Activated CD8-positive, alpha-beta T cell treated with anti-CD3 and anti-CD28 coated beads, Interleukin-2, amount 10 ng/mL, durations not matched to agents 7 days and 5 days (primary cell): ENCODE measurements at regions of chr20 and their contacts with region 1.

Region 1: GRCh38 chr20:45436732-45437391 is 20.9 kb downstream of the PIGT start:
- DNase-seq: peak; percentile 90
- ATAC-seq: peak; percentile 99
- H3K4me3 Mint-ChIP-seq: peak overlapping the region; percentile 80
- H3K27ac Mint-ChIP-seq: peak overlapping the region; percentile 61
- H3K4me1 Mint-ChIP-seq: peaks cover 29% of the 10 kb centered on the region
- H3K27me3 Mint-ChIP-seq: peaks cover 1% of the 10 kb centered on the region

Region 2: DNA sequence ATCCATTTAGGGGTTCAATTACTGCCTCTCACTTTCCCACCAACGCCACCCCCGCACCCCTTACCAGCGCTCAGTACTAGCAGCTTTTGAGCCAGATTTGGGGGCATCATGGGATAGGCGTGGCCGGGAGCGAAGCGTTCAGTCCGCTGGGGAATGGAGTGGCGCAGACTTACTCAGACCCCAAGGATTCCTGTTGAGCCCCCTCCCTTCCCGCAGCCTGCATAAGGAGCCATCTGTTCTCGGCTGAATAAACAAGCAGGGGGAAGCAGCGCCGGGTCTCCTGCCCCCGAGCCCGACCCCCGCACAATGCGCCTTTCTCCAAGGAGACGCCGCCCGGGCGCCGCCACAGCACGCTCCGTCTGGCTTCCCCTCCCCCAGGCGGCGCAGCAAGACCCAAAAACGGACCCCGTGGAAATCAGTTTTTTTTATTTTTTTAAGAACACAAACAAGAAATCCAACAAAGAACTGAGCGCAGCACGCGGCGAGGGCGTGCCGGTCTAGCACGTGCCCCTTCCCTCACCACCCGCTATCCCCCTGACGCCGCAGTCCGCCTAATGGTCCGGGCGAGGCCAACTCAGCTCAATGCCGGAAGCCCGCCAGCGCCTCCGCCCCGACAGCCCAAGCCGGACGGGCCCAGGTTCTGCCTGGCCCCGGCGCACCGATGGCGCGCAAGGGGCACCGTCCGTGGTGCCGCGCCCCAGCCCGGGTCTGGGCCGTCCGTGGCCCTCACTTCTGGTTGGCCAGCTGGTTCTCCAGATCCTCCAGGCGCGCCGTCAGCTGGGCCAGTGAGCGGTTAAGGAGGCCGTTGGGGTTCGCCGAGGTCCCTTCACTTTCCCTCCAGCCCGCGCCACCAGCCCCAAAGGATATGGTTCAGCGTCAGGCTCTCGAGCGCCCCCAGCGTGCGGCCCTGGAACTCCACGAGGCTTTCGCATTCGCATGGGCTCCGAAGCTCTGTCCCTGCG is 143.5 kb before region 1 on chr20:
- CTCF ChIA-PET with region 1: interaction called, 20 read pairs
- POLR2A ChIA-PET with region 1: no interaction called
- DNase-seq: peak; percentile 87
- ATAC-seq: peak; percentile 88
- H3K4me3 Mint-ChIP-seq: peak overlapping the region; percentile 65
- H3K27ac Mint-ChIP-seq: no peak overlapping the region
- H3K4me1 Mint-ChIP-seq: peaks cover 11% of the 10 kb centered on the region
- H3K27me3 Mint-ChIP-seq: peaks cover 29% of the 10 kb centered on the region

Region 3: DNA sequence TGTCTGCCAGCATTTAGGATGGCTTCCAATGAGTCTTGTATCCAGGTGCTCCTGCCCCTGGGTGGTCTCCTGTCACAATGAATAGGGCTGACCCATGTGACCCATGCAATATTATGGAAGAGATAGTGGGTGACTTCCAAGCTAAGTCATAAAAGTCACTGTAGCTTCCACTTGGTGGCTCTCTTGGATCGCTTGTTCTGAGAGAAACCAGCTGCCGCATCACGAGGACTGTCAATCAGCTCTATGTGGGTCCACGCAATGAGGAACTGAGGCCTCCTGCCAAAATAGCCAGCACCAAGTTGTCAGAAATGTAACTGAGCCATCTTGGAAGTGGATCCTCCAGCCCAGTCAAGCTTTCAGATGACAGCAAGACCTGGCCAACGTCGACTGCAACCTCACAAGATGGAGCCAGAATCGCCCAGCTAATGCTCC is 113.9 kb before region 1 on chr20:
- CTCF ChIA-PET with region 1: interaction called, 59 read pairs
- POLR2A ChIA-PET with region 1: interaction called, 4 read pairs
- DNase-seq: no peak
- ATAC-seq: no peak
- H3K4me3 Mint-ChIP-seq: no peak overlapping the region
- H3K27ac Mint-ChIP-seq: no peak overlapping the region
- H3K4me1 Mint-ChIP-seq: peaks cover 40% of the 10 kb centered on the region
- H3K27me3 Mint-ChIP-seq: no peaks in the 10 kb centered on the region

Region 4: DNA sequence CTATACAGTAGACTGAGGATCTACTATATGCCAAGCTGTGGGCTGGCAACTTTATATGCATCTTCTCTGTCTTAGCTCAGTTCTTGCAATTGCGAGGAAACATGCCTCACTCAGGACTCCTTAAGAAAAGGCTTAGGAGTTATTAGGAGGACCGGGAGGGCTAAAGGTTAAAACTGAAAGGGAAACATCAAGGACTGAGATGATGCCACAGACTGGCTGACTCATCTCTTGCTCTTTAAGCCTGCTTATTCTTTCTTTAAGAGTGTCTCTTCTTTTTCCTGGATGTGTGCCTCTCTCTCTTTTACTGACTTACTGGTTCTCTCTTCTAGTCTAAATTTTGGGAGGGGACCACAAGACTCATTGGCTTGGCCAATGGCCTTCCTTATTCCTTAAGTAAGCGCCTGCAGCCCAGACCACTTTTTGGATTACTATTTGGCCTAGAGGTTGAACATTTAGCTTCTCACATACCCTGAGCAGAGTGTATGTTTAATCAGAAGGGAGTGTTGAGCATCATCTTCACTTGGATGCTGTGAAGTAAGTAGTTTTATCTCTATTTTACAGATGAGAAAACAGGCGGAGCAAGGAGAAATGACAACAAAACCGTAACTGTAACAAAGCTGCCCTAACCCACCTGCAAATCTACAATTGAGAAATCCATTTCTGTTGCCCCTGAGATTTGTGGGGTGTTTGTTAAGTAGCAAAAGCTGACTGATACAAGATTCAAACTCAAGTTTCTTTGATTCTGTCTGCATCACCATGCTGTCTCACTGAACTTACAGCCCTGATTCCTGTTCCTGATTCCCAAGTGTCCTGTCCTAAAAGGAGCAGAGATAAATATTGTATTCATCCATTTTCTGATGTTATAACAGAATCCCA is 81.4 kb before region 1 on chr20:
- CTCF ChIA-PET with region 1: interaction called, 606 read pairs
- POLR2A ChIA-PET with region 1: no interaction called
- DNase-seq: no peak
- ATAC-seq: peak; percentile 69
- H3K4me3 Mint-ChIP-seq: peak overlapping the region; percentile 11
- H3K27ac Mint-ChIP-seq: peak overlapping the region; percentile 70
- H3K4me1 Mint-ChIP-seq: peaks cover 59% of the 10 kb centered on the region
- H3K27me3 Mint-ChIP-seq: peaks cover 2% of the 10 kb centered on the region

Region 5: GRCh38 chr20:45373353-45374100 is 63.3 kb before region 1 on chr20:
- CTCF ChIA-PET with region 1: interaction called, 606 read pairs
- POLR2A ChIA-PET with region 1: interaction called, 13 read pairs
- DNase-seq: peak; percentile 91
- ATAC-seq: peak; percentile 90
- H3K4me3 Mint-ChIP-seq: peak overlapping the region; percentile 73
- H3K27ac Mint-ChIP-seq: peak overlapping the region; percentile 87
- H3K4me1 Mint-ChIP-seq: peaks cover 38% of the 10 kb centered on the region
- H3K27me3 Mint-ChIP-seq: no peaks in the 10 kb centered on the region

Region 6: GRCh38 chr20:45406259-45407066 is 30.4 kb before region 1 on chr20:
- CTCF ChIA-PET with region 1: interaction called, 34 read pairs
- POLR2A ChIA-PET with region 1: no interaction called
- DNase-seq: peak; percentile 54
- ATAC-seq: peak; percentile 62
- H3K4me3 Mint-ChIP-seq: peak overlapping the region; percentile 73
- H3K27ac Mint-ChIP-seq: peak overlapping the region; percentile 49
- H3K4me1 Mint-ChIP-seq: peaks cover 16% of the 10 kb centered on the region
- H3K27me3 Mint-ChIP-seq: peaks cover 15% of the 10 kb centered on the region

Region 7: DNA sequence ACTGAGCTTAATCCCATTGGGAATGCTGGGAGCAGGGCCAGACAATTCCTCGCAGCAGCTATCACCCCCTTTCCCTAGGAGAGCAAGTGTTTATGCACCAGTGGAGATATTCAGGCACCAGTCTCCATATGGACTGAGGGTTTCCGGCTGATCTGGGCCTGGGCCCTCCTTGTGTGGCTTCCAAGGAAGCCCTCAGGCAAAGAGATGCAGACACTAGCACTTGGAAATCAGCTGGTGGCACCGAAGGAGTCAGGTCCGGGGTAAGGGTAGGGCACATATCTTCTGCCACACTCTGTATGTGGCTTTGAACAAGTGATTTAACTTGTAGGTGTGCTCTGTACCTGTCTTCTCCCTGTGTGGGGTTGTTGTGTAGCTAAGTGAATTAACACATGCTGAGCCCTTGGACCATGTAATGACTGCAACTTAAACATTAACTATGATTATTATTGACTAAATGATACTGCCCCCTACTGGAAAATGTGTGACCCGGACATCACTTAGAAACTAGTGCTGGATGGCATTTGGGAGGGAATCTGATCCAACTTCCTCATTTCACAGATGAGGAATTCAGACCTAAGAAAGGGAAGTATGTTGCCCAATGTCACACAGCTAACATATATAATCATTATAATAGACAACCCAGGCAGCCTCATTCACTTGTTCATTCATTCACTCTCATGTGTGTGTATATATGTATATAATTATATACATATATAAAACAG is 13.4 kb after region 1 on chr20:
- CTCF ChIA-PET with region 1: interaction called, 118 read pairs
- POLR2A ChIA-PET with region 1: interaction called, 3 read pairs
- DNase-seq: peak; percentile 42
- ATAC-seq: peak; percentile 50
- H3K4me3 Mint-ChIP-seq: no peak overlapping the region
- H3K27ac Mint-ChIP-seq: no peak overlapping the region
- H3K4me1 Mint-ChIP-seq: peaks cover 17% of the 10 kb centered on the region
- H3K27me3 Mint-ChIP-seq: peaks cover 9% of the 10 kb centered on the region